ENCODE measurements at regions of chr2 and their contacts with region 1.

Region 1: DNA sequence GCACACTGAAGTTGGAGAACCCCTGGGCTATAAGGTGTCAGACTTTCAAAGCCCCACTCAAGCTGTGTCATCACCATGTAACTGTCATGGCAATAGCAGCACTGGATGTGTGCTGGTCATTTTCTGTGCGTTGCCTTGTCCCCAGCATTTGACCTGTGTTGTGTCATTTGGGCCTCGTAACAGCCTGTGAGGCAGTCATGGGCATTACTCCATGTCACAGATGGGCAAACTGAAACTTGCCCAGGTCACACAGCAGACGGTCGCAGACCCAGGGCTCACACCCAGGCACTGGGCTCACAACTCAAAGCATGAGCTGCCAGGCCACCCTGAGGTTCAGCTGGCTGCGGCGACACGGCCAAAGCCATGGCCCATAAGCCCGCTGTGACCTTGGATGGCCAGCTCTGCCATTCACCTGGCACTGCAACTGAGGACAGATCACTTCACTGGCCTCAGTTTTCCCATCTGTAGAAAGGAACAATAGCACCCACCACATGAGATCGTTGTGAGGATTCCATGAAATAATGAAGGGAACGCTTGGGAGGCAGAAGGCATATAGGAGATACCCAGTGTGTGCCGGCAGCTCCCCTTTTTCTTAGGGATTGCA is 36.7 kb downstream of the INHBB start:
- DNase-seq: no peak
- ATAC-seq: no peak
- H3K4me3 ChIP-seq: no peak overlapping the region
- H3K27ac ChIP-seq: no peak overlapping the region
- H3K4me1 ChIP-seq: no peaks in the 10 kb centered on the region
- H3K27me3 ChIP-seq: peaks cover 0 to 32% (median 19%) of the 10 kb centered on the region in 7 donors
- CTCF ChIP-seq: no peak

Region 2: DNA sequence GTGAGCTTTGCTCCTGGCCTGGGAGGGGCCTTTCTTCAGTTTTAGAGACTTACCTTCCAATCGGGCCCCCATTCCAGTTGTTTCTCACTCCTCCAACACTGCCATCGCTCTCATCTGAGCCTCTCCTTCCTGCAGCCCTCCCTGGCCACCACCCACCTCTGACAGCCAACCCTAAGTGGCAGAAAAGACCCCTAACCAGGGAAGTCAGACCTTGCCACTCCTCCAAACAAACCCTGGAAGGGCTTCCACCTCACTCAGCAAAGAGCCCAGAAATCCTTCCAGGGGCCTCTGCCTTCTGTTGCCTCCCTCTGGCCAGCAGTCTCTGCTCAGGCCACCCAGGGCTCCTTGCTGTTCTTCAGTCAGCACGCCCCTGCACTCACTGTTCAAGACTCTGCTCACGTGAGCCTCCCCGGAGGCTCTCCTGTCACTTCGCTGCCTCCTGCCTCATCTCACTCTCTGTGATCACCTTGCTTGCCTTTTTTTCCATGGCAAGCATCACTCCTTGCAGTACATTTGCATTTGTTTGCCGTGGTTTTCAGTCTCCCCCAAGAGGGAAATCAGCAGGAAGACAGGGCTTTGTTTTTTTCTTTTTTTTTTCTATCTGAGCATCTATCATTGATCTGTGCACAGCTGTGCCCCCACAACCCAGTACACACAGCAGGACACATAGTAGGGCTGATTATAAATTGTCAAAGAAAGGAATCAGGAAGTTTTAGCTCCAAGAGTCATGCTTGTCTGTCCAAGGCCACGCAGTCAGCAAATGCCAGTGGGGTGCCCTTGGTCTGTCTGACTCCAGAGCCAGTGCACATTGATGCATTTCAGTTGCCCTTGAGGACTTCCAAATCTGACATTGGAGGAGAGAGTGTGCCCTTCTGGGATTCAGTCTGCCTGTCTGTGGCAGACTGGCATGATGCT is 47.2 kb after region 1 on chr2:
- intact Hi-C with region 1: loop called in 1 of 10 experiments (anchors 1 kb)
- DNase-seq: no peak
- ATAC-seq: no peak
- H3K4me3 ChIP-seq: no peak overlapping the region
- H3K27ac ChIP-seq: no peak overlapping the region
- H3K4me1 ChIP-seq: no peaks in the 10 kb centered on the region
- H3K27me3 ChIP-seq: peaks cover 0 to 34% (median 8%) of the 10 kb centered on the region in 7 donors
- CTCF ChIP-seq: no peak